GM12878 (cell line): ENCODE measurements at regions of chr15 and their contacts with region 1.

Region 1: GRCh38 chr15:58227706-58228543 is 89.7 kb downstream of the AQP9 start:
- DNase-seq: peak; percentile 37
- ATAC-seq: peak; percentile 85
- H3K4me3 ChIP-seq: no peak overlapping the region
- H3K27ac ChIP-seq: no peak overlapping the region
- H3K4me1 ChIP-seq: no peaks in the 10 kb centered on the region
- H3K27me3 ChIP-seq: no peaks in the 10 kb centered on the region; a peak in 1 of 4 replicates
- CTCF ChIP-seq: peak; percentile 69 to 94 (median 85); a peak in 5 of 6 replicates
- EP300 ChIP-seq: no peak
- POLR2A ChIP-seq: no peak
- RAD21 ChIP-seq: peak; percentile 97

Region 2: DNA sequence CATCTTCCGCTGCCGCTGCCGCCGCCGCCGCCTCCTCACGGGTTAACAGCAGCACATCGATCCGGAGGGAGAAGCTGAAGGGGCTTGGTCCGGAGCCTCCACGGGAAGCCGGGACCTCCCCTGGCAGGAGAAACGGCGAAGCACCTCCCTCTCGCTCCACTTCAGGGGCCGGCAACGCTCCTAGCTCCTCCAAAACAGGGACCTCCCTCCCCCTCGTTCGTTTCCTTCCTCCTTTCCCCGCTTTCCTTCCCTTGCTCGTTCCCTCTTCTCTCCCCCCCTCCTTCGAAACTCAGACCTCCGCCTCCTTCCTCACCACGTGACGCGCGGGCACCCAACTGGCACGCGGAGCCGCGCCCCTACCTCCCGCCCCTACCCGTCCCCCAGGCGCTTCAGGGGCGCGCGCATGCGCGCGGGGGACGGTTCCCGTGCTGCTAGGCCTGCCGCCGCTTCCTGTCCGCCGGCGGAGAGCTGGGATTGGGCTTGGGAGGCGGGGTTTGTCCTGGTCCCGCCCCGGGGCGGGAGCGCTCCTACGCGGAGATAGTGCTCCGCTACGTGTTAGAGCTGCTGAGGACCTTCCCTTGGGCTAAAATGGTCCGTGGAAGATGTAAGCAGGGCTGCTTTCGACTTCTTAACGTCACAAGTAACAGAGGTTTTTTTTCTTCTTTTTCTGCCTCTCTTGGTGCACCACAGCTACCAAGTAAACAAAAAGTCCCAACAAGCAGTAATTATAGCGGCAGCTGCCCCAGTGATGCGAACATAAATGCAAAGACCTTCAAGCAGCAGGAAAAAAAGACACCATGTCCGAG is 521.8 kb after region 1 on chr15 and contains the start of gene ADAM10:
- CTCF ChIA-PET with region 1: interaction called, 4 read pairs
- POLR2A ChIA-PET with region 1: no interaction called
- RAD21 ChIA-PET with region 1: interaction called, 4 read pairs
- SMC1A ChIA-PET with region 1: interaction called, 3 read pairs
- in situ Hi-C with region 1: no loop called
- intact Hi-C with region 1: loop called (anchors 5 kb)
- DNase-seq: peak; percentile 90
- ATAC-seq: peak; percentile 91
- H3K4me3 ChIP-seq: peak within 1 kb of the TSS; percentile 94
- H3K27ac ChIP-seq: peak within 1 kb of the TSS; percentile 91
- H3K4me1 ChIP-seq: no peaks in the 10 kb centered on the region
- H3K27me3 ChIP-seq: no peaks in the 10 kb centered on the region
- CTCF ChIP-seq: no peak
- EP300 ChIP-seq: no peak
- POLR2A ChIP-seq: peak; percentile 80
- RAD21 ChIP-seq: no peak; the same call in 1 of the 2 replicates
- polyA plus RNA-seq, gene ADAM10: 10.0 to 11.1 TPM

Region 3: GRCh38 chr15:58770857-58771620 is 543.1 kb after region 1 on chr15 and contains the start of gene MINDY2:
- CTCF ChIA-PET with region 1: interaction called, 10 read pairs
- POLR2A ChIA-PET with region 1: no interaction called
- RAD21 ChIA-PET with region 1: interaction called, 9 read pairs
- SMC1A ChIA-PET with region 1: interaction called, 7 read pairs
- in situ Hi-C with region 1: no loop called
- intact Hi-C with region 1: no loop called
- DNase-seq: peak; percentile 94
- ATAC-seq: peak; percentile 97
- H3K4me3 ChIP-seq: peak within 1 kb of the TSS; percentile 91
- H3K27ac ChIP-seq: peak within 1 kb of the TSS; percentile 82
- H3K4me1 ChIP-seq: no peaks in the 10 kb centered on the region
- H3K27me3 ChIP-seq: no peaks in the 10 kb centered on the region
- CTCF ChIP-seq: peak; percentile 45 to 46 (median 45); a peak in 4 of 6 replicates
- EP300 ChIP-seq: no peak
- POLR2A ChIP-seq: peak; percentile 93
- RAD21 ChIP-seq: peak; percentile 33; the same call in 1 of the 2 replicates
- polyA plus RNA-seq, gene MINDY2: 0.73 to 0.74 TPM

Region 4: GRCh38 chr15:58957101-58957973 is 729.4 kb after region 1 on chr15:
- CTCF ChIA-PET with region 1: interaction called, 8 read pairs
- POLR2A ChIA-PET with region 1: no interaction called
- RAD21 ChIA-PET with region 1: interaction called, 3 read pairs
- SMC1A ChIA-PET with region 1: interaction called, 3 read pairs
- in situ Hi-C with region 1: no loop called
- intact Hi-C with region 1: loop called (anchors 10 kb)
- DNase-seq: no peak
- ATAC-seq: peak; percentile 98
- H3K4me3 ChIP-seq: no peak overlapping the region
- H3K27ac ChIP-seq: no peak overlapping the region
- H3K4me1 ChIP-seq: peaks cover 11% of the 10 kb centered on the region
- H3K27me3 ChIP-seq: no peaks in the 10 kb centered on the region
- CTCF ChIP-seq: peak; percentile 79 to 87 (median 81)
- EP300 ChIP-seq: no peak
- POLR2A ChIP-seq: no peak
- RAD21 ChIP-seq: peak; percentile 82

Region 5: DNA sequence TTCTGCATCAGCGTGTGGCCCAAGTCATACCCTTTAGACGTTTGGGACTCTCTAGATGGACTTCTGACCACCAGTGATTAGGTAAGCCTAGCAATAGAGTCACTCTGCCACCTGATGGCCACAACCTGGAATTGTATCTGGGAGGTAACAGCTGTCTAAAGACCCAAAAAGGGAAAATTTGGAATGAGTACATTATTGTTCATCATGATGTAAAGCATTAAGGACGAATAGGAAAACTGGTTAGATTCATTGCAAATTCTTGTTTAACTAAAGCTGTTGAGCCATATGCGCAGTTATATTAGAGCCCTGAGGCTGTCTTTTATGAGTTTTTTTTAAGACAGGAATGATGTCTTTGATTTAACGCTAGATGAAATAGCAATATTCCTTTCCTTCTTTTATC is 1273.7 kb after region 1 on chr15:
- CTCF ChIA-PET with region 1: interaction called, 15 read pairs
- POLR2A ChIA-PET with region 1: no interaction called
- RAD21 ChIA-PET with region 1: interaction called, 4 read pairs
- SMC1A ChIA-PET with region 1: interaction called, 4 read pairs
- in situ Hi-C with region 1: loop called (anchors 10 kb)
- intact Hi-C with region 1: no loop called
- DNase-seq: no peak
- ATAC-seq: peak; percentile 89
- H3K4me3 ChIP-seq: no peak overlapping the region
- H3K27ac ChIP-seq: no peak overlapping the region
- H3K4me1 ChIP-seq: no peaks in the 10 kb centered on the region
- H3K27me3 ChIP-seq: no peaks in the 10 kb centered on the region
- CTCF ChIP-seq: peak; percentile 80 to 84 (median 81)
- EP300 ChIP-seq: no peak
- POLR2A ChIP-seq: no peak
- RAD21 ChIP-seq: peak; percentile 91